ENCODE measurements at regions of chr3 and their contacts with region 1.

Region 1: GRCh38 chr3:141561426-141562034 is 74.7 kb downstream of the RASA2 start:
- DNase-seq: peak in 6 of 9 experiments; percentile 28 to 83 (median 46)
- ATAC-seq: peak; percentile 78
- H3K4me3 ChIP-seq: no peak overlapping the region
- H3K4me3 Mint-ChIP-seq: no peak overlapping the region
- H3K27ac ChIP-seq: no peak overlapping the region
- H3K27ac Mint-ChIP-seq: peak overlapping the region; percentile 66
- H3K4me1 ChIP-seq: peaks cover 46% of the 10 kb centered on the region
- H3K4me1 Mint-ChIP-seq: peaks cover 38% of the 10 kb centered on the region
- H3K27me3 ChIP-seq: no peaks in the 10 kb centered on the region
- H3K27me3 Mint-ChIP-seq: no peaks in the 10 kb centered on the region
- CTCF ChIP-seq: peak; percentile 100

Region 2: DNA sequence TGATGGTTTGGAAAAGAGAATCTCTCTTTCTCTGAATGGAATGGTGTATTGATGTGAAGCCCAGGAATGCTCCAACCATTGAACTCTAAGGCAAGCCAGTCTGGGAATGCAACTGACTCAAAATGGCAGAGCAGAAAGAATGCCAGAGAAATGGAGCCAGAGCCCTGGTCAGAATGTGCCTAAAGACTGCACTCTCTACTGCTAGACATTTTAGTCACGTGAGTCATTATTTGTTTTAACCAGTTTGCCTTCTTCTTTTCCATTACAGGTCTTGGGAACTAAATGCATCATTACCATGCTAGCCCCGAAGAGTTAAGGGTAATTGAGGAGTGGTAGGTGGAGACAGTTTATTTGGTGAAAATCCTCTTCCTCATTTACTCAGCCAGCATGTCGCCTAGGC is 951.0 kb before region 1 on chr3:
- CTCF ChIA-PET with region 1: no interaction called
- POLR2A ChIA-PET with region 1: no interaction called
- intact Hi-C with region 1: no loop called
- DNase-seq: no peak
- ATAC-seq: no peak
- H3K4me3 ChIP-seq: no peak overlapping the region
- H3K4me3 Mint-ChIP-seq: no peak overlapping the region
- H3K27ac ChIP-seq: no peak overlapping the region
- H3K27ac Mint-ChIP-seq: no peak overlapping the region
- H3K4me1 ChIP-seq: no peaks in the 10 kb centered on the region
- H3K4me1 Mint-ChIP-seq: no peaks in the 10 kb centered on the region
- H3K27me3 ChIP-seq: no peaks in the 10 kb centered on the region
- H3K27me3 Mint-ChIP-seq: peaks cover 3% of the 10 kb centered on the region
- CTCF ChIP-seq: no peak

Region 3: GRCh38 chr3:141303481-141304223 is 257.9 kb before region 1 on chr3:
- CTCF ChIA-PET with region 1: interaction called, 15 read pairs
- POLR2A ChIA-PET with region 1: no interaction called
- intact Hi-C with region 1: no loop called
- DNase-seq: peak in 8 of 9 experiments; percentile 40 to 85 (median 64)
- ATAC-seq: peak; percentile 56
- H3K4me3 ChIP-seq: no peak overlapping the region
- H3K4me3 Mint-ChIP-seq: no peak overlapping the region
- H3K27ac ChIP-seq: no peak overlapping the region
- H3K27ac Mint-ChIP-seq: no peak overlapping the region
- H3K4me1 ChIP-seq: peaks cover 60% of the 10 kb centered on the region
- H3K4me1 Mint-ChIP-seq: peaks cover 66% of the 10 kb centered on the region
- H3K27me3 ChIP-seq: no peaks in the 10 kb centered on the region
- H3K27me3 Mint-ChIP-seq: no peaks in the 10 kb centered on the region
- CTCF ChIP-seq: peak; percentile 85

Region 4: GRCh38 chr3:141465221-141465620 is 96.3 kb before region 1 on chr3:
- CTCF ChIA-PET with region 1: interaction called, 283 read pairs
- POLR2A ChIA-PET with region 1: interaction called, 7 read pairs
- intact Hi-C with region 1: loop called (anchors 1 kb)
- DNase-seq: no peak
- ATAC-seq: no peak
- H3K4me3 ChIP-seq: no peak overlapping the region
- H3K4me3 Mint-ChIP-seq: no peak overlapping the region
- H3K27ac ChIP-seq: no peak overlapping the region
- H3K27ac Mint-ChIP-seq: no peak overlapping the region
- H3K4me1 ChIP-seq: no peaks in the 10 kb centered on the region
- H3K4me1 Mint-ChIP-seq: peaks cover 3% of the 10 kb centered on the region
- H3K27me3 ChIP-seq: no peaks in the 10 kb centered on the region
- H3K27me3 Mint-ChIP-seq: no peaks in the 10 kb centered on the region
- CTCF ChIP-seq: no peak

Region 5: DNA sequence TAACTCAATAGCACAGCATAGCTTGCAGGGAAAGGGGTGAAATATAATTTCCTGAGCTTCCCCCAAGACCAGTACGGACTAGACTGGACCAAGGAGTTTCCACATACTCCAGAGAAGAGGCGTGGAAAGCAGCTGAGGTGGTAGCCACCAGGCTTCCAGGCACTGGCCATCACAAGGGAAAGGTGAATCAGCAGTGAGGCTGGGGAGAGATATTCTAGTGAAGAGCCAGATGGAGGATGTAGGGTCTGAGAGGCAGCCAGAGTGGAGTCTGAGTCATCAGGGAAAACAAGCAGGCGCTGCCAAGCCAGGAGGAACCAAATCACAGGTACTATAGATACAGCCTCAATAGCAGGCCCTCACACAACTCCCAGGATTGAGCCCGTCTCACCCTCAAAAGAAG is 84.3 kb before region 1 on chr3:
- CTCF ChIA-PET with region 1: interaction called, 116 read pairs
- POLR2A ChIA-PET with region 1: interaction called, 5 read pairs
- intact Hi-C with region 1: loop called (anchors 1 kb)
- DNase-seq: no peak
- ATAC-seq: no peak
- H3K4me3 ChIP-seq: no peak overlapping the region
- H3K4me3 Mint-ChIP-seq: no peak overlapping the region
- H3K27ac ChIP-seq: no peak overlapping the region
- H3K27ac Mint-ChIP-seq: no peak overlapping the region
- H3K4me1 ChIP-seq: peaks cover 34% of the 10 kb centered on the region
- H3K4me1 Mint-ChIP-seq: peaks cover 44% of the 10 kb centered on the region
- H3K27me3 ChIP-seq: no peaks in the 10 kb centered on the region
- H3K27me3 Mint-ChIP-seq: no peaks in the 10 kb centered on the region
- CTCF ChIP-seq: no peak

Region 6: DNA sequence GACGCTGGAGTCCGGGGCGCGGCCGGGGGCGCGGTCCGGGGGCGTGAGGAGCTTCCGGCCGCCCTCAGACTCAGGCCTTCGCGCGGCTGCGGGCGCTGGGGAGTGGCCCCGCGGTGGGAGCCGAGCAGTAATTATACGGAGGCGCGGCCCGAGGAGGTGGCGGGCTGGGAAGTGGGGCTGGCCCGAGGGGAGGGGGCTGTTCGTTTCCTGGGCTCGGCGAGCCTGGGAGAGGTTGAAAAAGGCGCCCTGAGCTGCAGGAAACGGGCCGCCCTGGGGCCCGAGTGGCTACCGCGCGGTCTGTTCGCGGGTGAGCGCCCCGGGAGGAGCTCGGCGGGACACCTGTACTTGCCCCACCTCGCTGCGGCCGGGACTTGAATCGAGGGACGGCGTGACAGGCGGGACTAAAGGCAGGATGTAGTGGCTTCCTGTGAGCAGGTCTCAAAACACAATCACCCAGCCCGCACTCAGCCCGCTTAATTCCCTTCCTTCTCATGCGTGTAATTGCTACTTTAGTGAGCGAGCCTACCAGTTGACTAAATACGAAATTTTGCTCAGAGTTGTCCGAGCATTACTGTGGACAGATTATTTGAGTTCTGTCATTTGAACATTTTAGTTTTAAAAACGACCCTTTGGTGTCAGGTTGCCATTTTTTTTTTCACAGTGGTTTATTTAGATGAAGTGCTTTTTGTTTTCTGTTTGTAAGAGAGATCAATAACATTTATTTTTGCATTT is 73.8 kb before region 1 on chr3:
- CTCF ChIA-PET with region 1: interaction called, 30 read pairs
- POLR2A ChIA-PET with region 1: interaction called, 13 read pairs
- intact Hi-C with region 1: no loop called
- DNase-seq: peak; percentile 67 to 94 (median 87)
- ATAC-seq: peak; percentile 60
- H3K4me3 ChIP-seq: peak overlapping the region; percentile 59 to 68
- H3K4me3 Mint-ChIP-seq: peak overlapping the region; percentile 93
- H3K27ac ChIP-seq: peak overlapping the region; percentile 73 to 85
- H3K27ac Mint-ChIP-seq: peak overlapping the region; percentile 96
- H3K4me1 ChIP-seq: peaks cover 65% of the 10 kb centered on the region
- H3K4me1 Mint-ChIP-seq: peaks cover 76% of the 10 kb centered on the region
- H3K27me3 ChIP-seq: no peaks in the 10 kb centered on the region
- H3K27me3 Mint-ChIP-seq: no peaks in the 10 kb centered on the region
- CTCF ChIP-seq: no peak

Measured in CD8-positive, alpha-beta T cell (primary cell).